Right ventricle myocardium inferior (tissue), 1 donor: ENCODE measurements at regions of chr12 and their contacts with region 1.

Region 1: DNA sequence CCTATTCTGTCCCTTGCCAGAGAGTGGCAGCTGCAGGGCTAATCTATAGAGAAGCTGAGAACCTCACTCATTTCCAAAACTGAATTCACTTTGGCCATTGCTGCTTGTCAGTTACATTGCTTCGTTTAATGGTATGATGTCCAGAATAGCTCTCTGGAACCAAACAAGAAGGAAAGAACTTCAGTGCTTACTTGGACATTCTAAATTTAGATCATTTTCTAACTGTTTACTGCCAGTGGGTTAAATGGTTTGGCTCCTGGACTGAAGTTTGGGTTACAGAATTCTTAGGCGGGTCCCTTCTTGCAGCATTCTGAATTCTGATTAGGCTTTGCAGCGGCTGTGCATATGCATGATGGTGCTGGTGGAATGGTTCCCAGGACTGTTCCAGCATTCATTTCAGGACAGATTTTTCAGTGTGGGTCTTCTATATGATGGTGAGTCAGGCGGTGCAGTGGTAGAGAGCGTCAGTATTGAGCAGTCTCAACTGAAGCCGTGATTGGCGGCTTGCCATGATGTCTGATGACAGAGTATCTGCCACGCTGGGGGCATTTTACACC is 148.7 kb downstream of the DYRK2 start:
- DNase-seq: peak; percentile 69
- ATAC-seq: peak; percentile 60

Region 2: DNA sequence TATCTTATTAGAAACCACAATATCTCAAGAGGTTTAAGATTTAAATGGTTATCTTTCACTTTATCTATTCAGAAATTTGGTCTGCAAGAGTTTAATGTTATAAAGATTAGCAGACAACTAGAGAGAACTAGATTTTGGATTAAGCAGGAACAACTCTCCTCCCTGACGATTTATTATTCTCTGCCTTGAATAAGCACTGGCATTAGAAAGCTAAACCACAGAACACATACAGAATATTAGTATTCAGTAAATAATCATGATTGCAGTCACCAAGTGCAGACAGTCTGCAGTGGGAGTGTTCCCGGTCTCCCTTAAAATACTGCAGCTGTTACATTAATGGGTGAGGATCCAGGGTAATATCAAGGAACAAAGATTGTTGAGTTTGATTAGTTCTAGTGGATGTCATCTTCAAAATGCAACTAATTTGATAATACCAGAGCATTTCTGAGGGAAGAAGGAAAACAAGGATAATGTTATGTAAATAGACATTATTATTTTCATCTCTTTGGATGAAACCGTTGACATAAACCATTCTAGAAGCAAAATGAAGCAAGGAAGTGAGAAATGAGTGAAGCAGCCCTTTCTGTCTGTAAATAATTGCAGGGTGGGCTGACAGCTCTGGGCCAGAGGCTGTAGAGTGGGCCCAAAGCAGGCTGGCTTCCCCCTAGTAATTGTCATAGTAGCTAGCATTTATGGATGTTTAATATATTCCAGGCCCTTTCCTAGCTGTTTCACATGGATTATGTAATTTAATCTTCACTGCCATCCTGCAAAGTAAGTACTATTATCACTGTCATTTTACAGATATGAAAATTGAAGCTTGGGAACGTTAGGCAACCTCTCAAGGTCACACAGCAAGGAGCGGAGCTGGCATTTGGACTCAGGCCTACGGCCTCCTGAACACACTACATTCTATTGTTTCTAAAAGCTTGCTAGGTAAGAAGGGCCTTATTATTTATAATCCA is 69.3 kb before region 1 on chr12:
- intact Hi-C with region 1: loop called (anchors 5 kb)
- DNase-seq: no peak
- ATAC-seq: no peak

Region 3: DNA sequence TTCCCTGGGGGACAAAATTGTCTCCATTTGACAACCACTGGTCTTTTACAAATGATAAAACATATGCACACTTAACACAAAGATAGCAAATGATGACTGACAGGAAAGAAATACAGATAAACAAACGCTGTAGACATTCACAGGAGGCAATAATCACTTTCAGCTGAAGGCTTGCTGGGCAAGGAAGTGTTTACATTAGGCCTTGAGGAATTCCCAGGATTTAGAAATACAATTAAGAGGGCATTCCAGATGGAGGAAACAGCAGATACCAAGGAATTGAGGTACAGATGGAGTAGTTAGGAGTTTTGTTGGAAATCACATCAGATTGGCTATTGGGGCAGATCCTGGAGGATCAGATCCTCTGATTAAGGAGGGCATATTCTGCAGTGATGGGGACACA is 54.8 kb before region 1 on chr12:
- intact Hi-C with region 1: no loop called
- DNase-seq: no peak
- ATAC-seq: no peak